Activated T-helper 1 cell treated with anti-CD3 and anti-CD28 coated beads, Interleukin-12 subunit alpha, Interleukin-12 subunit beta, Interleukin-2, Interleukin-4 antibody, amounts not matched to agents 30 ng/mL and 10 ng/mL and 1 ng/mL, durations not matched to agents 14 hours and 24 hours and 36 hours (primary cell): ENCODE measurements at regions of chr19 and their contacts with region 1.

Region 1: GRCh38 chr19:54325194-54325621 is 12.2 kb upstream of the LILRA5 start:
- DNase-seq: peak; percentile 27
- H3K4me3 Mint-ChIP-seq: no peak overlapping the region
- H3K27ac Mint-ChIP-seq: no peak overlapping the region
- H3K4me1 Mint-ChIP-seq: peaks cover 17% of the 10 kb centered on the region
- H3K27me3 Mint-ChIP-seq: peaks cover 22% of the 10 kb centered on the region

Region 2: DNA sequence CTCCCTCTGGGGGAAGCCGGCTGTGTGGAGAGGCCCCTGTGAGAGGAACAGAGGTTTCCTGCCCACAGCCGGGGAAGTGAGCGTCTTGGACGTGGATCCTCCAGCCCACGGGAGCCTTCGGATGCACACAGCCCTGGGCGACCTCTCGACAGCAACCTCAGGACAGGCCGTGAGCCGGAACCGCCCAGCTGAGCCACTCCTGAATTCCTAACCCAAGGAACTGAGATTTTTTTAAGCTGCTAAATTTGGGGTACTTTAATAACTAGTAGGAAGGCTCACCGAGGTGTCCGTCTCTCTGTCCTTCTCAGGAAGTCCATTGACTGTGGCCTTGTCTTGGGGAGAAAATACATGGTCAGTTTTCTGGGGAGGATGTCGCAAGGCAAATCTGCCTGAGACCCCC is 30.5 kb after region 1 on chr19:
- intact Hi-C with region 1: loop called (anchors 1 kb)
- DNase-seq: no peak
- H3K4me3 Mint-ChIP-seq: no peak overlapping the region
- H3K27ac Mint-ChIP-seq: no peak overlapping the region
- H3K4me1 Mint-ChIP-seq: peaks cover 4% of the 10 kb centered on the region
- H3K27me3 Mint-ChIP-seq: peaks cover 5% of the 10 kb centered on the region